Esophagus squamous epithelium (tissue), 5 donors: ENCODE measurements at regions of chr21 and their contacts with region 1.

Region 1: DNA sequence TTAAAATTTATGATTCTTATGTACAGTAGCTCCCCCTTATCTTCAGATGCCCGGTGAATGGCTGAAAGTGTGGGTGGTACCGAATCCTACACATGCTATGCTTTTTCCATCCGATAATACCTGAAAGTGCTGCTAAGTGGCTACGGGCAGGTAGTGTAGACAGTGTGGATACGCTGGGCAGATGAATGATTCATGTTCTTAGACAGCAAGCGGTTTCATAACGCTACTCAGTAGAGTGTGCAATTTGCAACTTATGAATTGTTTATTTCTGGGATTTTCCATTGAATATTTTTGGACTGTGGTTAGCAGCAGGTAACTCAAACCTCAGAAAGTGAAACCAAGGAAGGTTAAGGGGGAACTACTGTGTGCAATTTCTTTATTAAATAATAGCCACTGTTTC is 7.5 kb downstream of the PCP4 start:
- DNase-seq: no peak
- H3K4me3 ChIP-seq: no peak overlapping the region
- H3K27ac ChIP-seq: peak overlapping the region in 1 of 4 donors; percentile 45
- H3K4me1 ChIP-seq: no peaks in the 10 kb centered on the region
- H3K27me3 ChIP-seq: no peaks in the 10 kb centered on the region
- CTCF ChIP-seq: no peak
- POLR2A ChIP-seq: no peak

Region 2: DNA sequence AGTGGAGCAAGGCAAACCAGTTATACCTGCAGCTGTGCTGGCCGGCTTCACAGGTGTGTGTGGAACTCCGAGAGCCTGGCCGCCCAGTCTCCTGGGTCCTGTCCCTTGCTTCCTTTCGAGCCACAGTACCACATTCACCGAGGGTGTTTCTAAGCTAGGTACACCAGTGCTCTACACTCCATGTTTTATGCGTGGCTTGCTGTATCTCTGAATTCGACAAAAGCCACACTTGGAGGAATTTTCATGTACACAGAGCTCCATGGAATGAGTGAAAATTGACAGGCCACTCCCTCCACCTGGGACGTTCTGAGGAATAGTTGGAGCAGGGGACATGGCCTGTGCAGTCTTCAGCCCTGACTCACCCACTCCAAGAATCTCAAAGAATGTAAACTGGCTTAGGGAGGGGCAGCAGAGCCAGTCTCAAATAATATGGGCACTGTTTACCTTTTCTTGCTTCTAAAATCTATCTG is 1055.0 kb before region 1 on chr21:
- intact Hi-C with region 1: loop called (anchors 10 kb)
- DNase-seq: no peak
- H3K4me3 ChIP-seq: peak overlapping the region in 1 of 4 donors; percentile 13
- H3K27ac ChIP-seq: peak overlapping the region; percentile 77 to 91 (median 87)
- H3K4me1 ChIP-seq: peaks cover 3 to 93% (median 54%) of the 10 kb centered on the region in 3 donors
- H3K27me3 ChIP-seq: no peaks in the 10 kb centered on the region
- CTCF ChIP-seq: no peak
- POLR2A ChIP-seq: no peak

Region 3: DNA sequence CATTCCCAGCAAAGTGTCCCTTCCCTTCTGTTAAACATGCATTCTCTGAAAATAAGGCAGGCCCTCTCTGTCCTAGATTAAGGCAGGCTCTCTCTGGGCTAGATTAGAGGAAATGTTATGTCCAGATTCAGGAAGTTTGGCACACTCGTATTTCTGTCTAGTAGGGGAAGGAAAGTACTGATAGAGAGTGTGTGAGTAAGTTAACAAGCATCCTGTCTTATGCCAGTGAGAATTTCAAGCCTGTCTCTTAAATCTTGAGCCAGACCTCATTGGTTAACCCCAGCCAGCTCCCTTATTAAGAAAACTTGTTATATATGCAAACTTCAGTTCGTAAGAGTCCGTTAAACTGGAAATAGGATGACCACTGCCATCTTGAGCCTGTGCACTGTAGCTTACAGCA is 98.2 kb before region 1 on chr21:
- intact Hi-C with region 1: no loop called
- DNase-seq: no peak
- H3K4me3 ChIP-seq: no peak overlapping the region
- H3K27ac ChIP-seq: no peak overlapping the region
- H3K4me1 ChIP-seq: no peaks in the 10 kb centered on the region
- H3K27me3 ChIP-seq: no peaks in the 10 kb centered on the region
- CTCF ChIP-seq: no peak
- POLR2A ChIP-seq: no peak